Heart right ventricle (tissue), 16 donors: ENCODE measurements at regions of chr17 and their contacts with region 1.

Region 1: GRCh38 chr17:14300575-14301278 is at the start of gene HS3ST3B1:
- DNase-seq: peak; percentile 98 to 99
- ATAC-seq: peak; percentile 91 to 97 (median 93)
- H3K4me3 ChIP-seq: peak within 1 kb of the TSS; percentile 46 to 80 (median 66)
- H3K27ac ChIP-seq: peak within 1 kb of the TSS; percentile 31 to 90 (median 74)
- H3K4me1 ChIP-seq: peaks cover 7 to 81% (median 67%) of the 10 kb centered on the region in 9 donors
- H3K27me3 ChIP-seq: peaks cover 7 to 90% (median 80%) of the 10 kb centered on the region in 7 donors
- CTCF ChIP-seq: peak in 2 of 9 donors; percentile 7 to 25
- total RNA-seq, gene HS3ST3B1: 1.1 to 5.9 (median 2.3) TPM

Region 2: GRCh38 chr17:13337864-13338371 is 962.8 kb before region 1 on chr17:
- intact Hi-C with region 1: loop called in 5 of 10 experiments (anchors 5 to 10 kb)
- DNase-seq: peak in 1 of 2 donors; percentile 29
- ATAC-seq: peak in 4 of 8 donors; percentile 47 to 67 (median 58)
- H3K4me3 ChIP-seq: peak overlapping the region in 8 of 10 donors; percentile 6 to 49 (median 40)
- H3K27ac ChIP-seq: no peak overlapping the region
- H3K4me1 ChIP-seq: peaks cover 0 to 6% (median 0%) of the 10 kb centered on the region in 9 donors
- H3K27me3 ChIP-seq: peaks cover 0 to 28% (median 0%) of the 10 kb centered on the region in 7 donors
- CTCF ChIP-seq: peak; percentile 47 to 82 (median 70)

Region 3: GRCh38 chr17:13888056-13888609 is 412.6 kb before region 1 on chr17:
- intact Hi-C with region 1: loop called in 1 of 10 experiments (anchors 10 kb)
- DNase-seq: peak in 1 of 2 donors; percentile 24
- ATAC-seq: peak in 1 of 8 donors; percentile 42
- H3K4me3 ChIP-seq: no peak overlapping the region
- H3K27ac ChIP-seq: no peak overlapping the region
- H3K4me1 ChIP-seq: peaks cover 0 to 26% (median 4%) of the 10 kb centered on the region in 9 donors
- H3K27me3 ChIP-seq: no peaks in the 10 kb centered on the region
- CTCF ChIP-seq: no peak

Region 4: DNA sequence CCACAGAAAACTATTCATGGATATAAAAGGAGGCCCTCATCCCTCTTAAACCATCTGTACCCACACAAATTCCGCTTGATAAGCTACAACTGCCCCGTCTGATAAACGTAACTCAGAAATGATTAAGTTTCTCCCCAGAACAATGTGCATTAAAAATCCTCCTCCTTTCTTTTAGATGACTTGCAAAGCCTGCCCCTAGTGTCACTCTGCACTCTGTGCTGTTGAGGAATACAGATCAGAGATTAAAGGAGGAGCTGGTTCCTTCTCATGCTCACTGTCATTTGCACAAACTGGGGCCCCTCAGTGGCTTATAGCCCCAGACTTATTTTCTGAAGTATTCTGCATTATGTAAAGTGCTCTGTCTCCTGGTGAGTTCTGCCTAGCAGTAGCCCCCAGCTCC is 97.3 kb before region 1 on chr17:
- intact Hi-C with region 1: loop called in 2 of 10 experiments (anchors 5 to 10 kb)
- DNase-seq: no peak
- ATAC-seq: no peak
- H3K4me3 ChIP-seq: no peak overlapping the region
- H3K27ac ChIP-seq: peak overlapping the region in 1 of 10 donors; percentile 51
- H3K4me1 ChIP-seq: peaks cover 0 to 81% (median 20%) of the 10 kb centered on the region in 9 donors
- H3K27me3 ChIP-seq: no peaks in the 10 kb centered on the region
- CTCF ChIP-seq: peak in 5 of 9 donors; percentile 16 to 43 (median 30)

Region 5: DNA sequence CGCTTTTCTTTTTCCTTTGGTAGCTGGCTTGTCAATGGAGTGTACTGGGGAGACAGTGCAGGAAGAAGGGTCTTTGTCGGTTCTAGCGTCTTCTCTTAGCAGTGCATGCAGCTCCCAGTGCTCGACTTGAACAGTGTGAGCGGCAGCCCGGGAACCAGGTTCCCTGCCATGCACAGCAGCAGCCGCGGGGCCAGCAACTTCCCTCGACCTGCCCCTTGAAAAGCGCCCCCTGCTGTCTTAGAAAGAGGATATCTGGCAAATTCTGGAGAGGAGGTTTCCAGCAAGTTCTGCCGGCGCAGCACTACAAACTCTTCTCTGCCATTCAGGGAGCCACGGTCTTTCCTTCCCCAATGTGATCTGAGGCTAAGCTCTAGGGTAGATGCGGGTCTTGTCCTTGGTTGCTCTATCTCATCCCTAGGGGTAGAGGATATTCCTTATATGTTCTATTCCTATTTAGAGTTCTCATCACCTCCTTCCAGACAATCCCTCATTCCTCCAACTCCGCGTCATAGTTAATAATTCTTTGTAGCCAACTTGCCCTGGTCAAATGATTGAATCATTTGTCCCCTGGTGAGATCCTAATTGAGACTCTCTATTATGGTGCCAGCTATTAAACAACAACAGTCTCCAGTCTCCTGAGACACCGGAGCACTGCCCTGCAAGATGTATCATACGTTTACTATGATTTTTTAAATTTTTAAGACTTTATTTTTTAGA is 513.1 kb after region 1 on chr17:
- intact Hi-C with region 1: loop called in 1 of 10 experiments (anchors 10 kb)
- DNase-seq: peak in 1 of 2 donors; percentile 13
- ATAC-seq: no peak
- H3K4me3 ChIP-seq: no peak overlapping the region
- H3K27ac ChIP-seq: no peak overlapping the region
- H3K4me1 ChIP-seq: no peaks in the 10 kb centered on the region
- H3K27me3 ChIP-seq: peaks cover 0 to 6% (median 0%) of the 10 kb centered on the region in 7 donors
- CTCF ChIP-seq: peak in 3 of 9 donors; percentile 19 to 46 (median 20)